SK-N-SH (cell line): ENCODE measurements at regions of chr7 and their contacts with region 1.

Region 1: DNA sequence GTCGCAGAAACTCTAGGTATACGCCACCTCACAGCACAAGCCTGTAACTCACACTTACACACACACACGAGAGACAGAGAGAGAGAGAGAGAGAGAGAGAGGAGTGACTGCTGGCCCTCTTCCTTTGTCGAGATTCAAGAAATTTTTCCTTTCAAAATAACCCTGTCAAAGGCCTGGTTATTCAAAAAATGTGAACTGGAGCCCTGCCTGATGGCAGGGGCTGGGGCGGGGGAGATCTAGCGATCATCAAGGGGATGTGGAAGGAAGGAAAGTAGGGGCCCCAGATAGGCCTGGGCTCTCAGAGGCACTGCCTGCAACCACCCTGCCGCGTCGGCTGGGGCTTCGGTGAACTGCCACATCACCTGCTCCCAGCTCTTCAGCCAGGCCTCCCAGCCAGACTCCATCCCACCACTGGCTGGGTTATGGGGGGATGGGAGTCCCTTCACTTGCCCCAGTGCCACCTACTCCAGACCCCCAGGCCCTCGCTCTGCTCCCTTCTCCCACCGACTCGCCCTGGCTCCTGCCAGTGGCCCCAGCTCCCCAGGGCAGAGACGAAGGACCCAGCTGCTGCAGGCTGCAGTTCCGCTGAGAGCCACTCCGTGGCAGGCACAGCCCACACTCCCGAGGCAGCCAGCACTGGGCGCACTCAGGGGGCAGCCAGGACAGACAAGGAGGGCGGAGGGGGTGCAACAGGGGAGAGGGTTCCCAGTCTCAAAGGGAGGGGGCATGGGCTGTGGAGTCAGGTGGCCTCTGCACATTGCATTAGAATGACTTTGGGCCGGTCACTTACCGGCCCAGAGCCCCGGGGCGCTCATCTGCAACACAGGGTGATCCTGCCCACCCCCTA is 15.3 kb downstream of the KCNH2 start:
- DNase-seq: peak; percentile 94
- H3K4me3 ChIP-seq: peak overlapping the region in 1 of 2 experiments; percentile 48; a peak in 1 of 4 replicates
- H3K27ac ChIP-seq: peak overlapping the region in 1 of 2 experiments; percentile 97; a peak in 2 of 4 replicates
- H3K4me1 ChIP-seq: peaks cover 0 to 89% of the 10 kb centered on the region in 2 experiments; a peak in 2 of 4 replicates
- H3K27me3 ChIP-seq: peaks cover 16% of the 10 kb centered on the region
- CTCF ChIP-seq: peak; percentile 95
- EP300 ChIP-seq: peak in 1 of 2 experiments; percentile 39; a peak in 1 of 4 replicates
- RAD21 ChIP-seq: peak; percentile 94

Region 2: DNA sequence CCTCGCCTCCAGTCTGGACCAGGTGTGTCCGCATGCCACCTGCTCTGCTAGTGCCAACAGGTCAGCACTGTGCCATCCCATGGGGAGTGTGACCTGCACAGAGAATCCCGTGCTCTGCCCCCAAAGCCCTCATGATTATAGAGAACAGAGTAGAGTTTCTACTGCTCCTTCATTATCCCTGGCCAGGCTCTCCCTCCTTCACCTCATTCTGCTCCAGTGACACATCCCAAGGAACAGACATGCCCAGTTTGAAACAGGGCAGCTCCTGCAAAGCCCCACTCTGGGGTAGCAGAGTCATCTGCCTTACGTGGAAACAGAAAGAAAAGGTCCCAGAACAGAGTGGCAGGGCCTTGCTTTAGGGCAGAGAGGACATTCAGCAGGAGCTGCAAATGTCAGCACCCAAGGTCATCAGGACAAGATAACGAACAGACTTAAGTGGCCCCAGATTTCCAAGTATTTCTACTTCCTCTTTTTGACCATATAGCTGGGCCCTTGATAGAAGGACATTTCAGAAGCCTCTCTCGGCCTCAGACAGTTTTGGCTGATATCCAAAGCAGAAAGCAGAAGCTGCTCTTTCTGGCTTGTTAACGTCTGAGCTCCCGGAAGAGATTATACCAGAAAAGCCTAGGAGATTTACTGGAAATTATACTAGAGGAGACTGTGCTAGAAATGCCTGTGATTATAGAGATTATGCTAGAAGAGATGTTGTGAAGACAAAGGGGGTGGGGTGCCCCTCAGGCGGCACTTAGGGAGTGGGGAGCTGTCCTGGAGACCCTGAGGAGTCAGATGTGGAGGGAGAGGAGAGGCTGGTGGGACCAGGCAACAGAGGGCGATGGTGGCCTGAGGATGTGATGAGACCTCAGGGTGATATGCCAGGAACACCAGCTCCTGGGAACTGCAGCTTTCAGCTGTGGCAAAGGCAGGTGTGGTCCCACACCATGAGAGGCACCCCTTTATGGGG is 175.2 kb before region 1 on chr7:
- CTCF ChIA-PET with region 1: interaction called, 67 read pairs
- POLR2A ChIA-PET with region 1: interaction called, 5 read pairs
- DNase-seq: peak; percentile 75
- H3K4me3 ChIP-seq: no peak overlapping the region
- H3K27ac ChIP-seq: peak overlapping the region; percentile 47 to 100; a peak in 3 of 4 replicates
- H3K4me1 ChIP-seq: peaks cover 19 to 61% of the 10 kb centered on the region in 2 experiments; a peak in 3 of 4 replicates
- H3K27me3 ChIP-seq: no peaks in the 10 kb centered on the region
- CTCF ChIP-seq: no peak
- EP300 ChIP-seq: peak; percentile 31 to 96; a peak in 3 of 4 replicates
- RAD21 ChIP-seq: peak; percentile 59

Region 3: DNA sequence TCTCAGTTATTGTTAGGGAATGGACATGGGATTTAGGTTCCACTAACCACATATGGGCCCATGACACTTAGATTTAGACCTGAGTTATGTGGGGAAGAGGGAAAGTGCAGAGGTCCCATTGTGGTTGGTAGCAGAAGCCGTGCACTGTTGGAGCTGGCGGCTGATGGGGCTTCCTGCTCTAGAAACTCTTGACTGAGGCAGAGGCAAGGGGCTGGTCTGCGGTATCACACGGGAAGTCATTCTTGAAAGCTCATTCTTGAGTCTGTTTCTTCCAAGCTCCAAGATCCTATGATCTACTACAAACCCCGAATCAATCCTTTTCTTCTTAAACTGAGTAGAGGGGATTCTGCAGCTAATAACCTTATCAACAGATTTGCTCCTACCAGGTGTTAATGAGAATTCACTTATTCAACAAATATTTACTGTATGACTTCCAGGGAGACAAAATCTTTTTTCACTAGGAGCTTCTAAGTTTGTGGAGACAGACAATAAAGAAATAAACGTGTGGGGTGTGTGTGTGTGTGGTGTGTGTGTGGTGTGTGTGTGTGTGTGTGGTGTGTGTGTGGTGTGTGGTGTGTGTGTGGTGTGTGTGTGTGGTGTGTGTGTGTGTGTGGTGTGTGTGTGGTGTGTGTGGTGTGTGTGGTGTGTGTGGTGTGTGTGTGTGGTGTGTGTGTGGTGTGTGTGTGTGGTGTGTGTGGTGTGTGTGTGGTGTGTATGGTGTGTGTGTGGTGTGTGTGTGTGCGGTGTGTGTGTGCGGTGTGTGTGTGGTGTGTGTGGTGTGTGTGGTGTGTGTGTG is 53.4 kb before region 1 on chr7:
- CTCF ChIA-PET with region 1: interaction called, 280 read pairs
- POLR2A ChIA-PET with region 1: no interaction called
- DNase-seq: peak; percentile 21
- H3K4me3 ChIP-seq: no peak overlapping the region
- H3K27ac ChIP-seq: no peak overlapping the region
- H3K4me1 ChIP-seq: peaks cover 0 to under 1% of the 10 kb centered on the region in 2 experiments; a peak in 1 of 4 replicates
- H3K27me3 ChIP-seq: peaks cover 14% of the 10 kb centered on the region
- CTCF ChIP-seq: no peak
- EP300 ChIP-seq: no peak
- RAD21 ChIP-seq: no peak

Region 4: DNA sequence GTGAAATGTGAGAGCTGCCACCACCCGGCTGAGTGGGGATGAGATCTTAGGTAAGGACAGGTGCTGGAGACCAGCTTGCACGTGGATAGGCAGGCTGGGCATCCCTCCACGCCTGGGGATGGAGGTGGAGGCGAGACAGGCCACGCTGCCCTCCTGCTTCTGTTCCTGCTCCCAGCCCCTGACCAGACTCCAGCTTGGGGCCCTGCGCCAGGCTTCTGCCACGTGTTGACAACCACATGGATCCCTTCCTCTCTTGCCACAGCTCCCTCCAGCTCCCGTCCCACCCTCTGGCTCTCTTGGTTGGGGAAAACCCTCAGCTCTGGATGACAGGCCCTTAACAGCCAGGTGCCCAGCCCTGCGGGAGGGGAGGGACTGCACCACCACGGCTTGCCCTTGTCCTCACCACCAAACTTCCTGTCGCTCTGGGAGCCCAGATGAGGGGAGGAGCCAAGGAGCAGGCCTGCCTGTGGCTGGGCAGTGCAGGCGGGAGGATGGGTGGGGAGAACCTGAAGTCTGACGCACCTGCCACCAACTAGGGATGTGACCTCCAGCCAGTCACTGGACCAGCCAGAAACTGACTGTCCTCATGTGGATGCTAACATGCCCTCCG is 20.7 kb before region 1 on chr7:
- CTCF ChIA-PET with region 1: interaction called, 49 read pairs
- POLR2A ChIA-PET with region 1: interaction called, 14 read pairs
- DNase-seq: peak; percentile 71
- H3K4me3 ChIP-seq: no peak overlapping the region
- H3K27ac ChIP-seq: peak overlapping the region in 1 of 2 experiments; percentile 82; a peak in 2 of 4 replicates
- H3K4me1 ChIP-seq: peaks cover 0 to 84% of the 10 kb centered on the region in 2 experiments; a peak in 2 of 4 replicates
- H3K27me3 ChIP-seq: 0 out of 2 replicates have a peak, but pooled peaks cover 11% of the 10 kb centered on the region
- CTCF ChIP-seq: no peak
- EP300 ChIP-seq: 0 out of 4 replicates have a peak, but pooled peaks of 1 of the 2 experiments have one; percentile 17
- RAD21 ChIP-seq: no peak

Region 5: GRCh38 chr7:150974468-150975391 is 12.0 kb after region 1 on chr7:
- CTCF ChIA-PET with region 1: interaction called, 761 read pairs
- POLR2A ChIA-PET with region 1: interaction called, 41 read pairs
- DNase-seq: peak; percentile 82
- H3K4me3 ChIP-seq: peak overlapping the region in 1 of 2 experiments; percentile 37; a peak in 2 of 4 replicates
- H3K27ac ChIP-seq: peak overlapping the region in 1 of 2 experiments; percentile 100; a peak in 3 of 4 replicates
- H3K4me1 ChIP-seq: peaks cover 0 to 90% of the 10 kb centered on the region in 2 experiments; a peak in 2 of 4 replicates
- H3K27me3 ChIP-seq: peaks cover 71% of the 10 kb centered on the region
- CTCF ChIP-seq: peak; percentile 36
- EP300 ChIP-seq: no peak
- RAD21 ChIP-seq: peak; percentile 38; the same call in 1 of the 2 replicates

Region 6: DNA sequence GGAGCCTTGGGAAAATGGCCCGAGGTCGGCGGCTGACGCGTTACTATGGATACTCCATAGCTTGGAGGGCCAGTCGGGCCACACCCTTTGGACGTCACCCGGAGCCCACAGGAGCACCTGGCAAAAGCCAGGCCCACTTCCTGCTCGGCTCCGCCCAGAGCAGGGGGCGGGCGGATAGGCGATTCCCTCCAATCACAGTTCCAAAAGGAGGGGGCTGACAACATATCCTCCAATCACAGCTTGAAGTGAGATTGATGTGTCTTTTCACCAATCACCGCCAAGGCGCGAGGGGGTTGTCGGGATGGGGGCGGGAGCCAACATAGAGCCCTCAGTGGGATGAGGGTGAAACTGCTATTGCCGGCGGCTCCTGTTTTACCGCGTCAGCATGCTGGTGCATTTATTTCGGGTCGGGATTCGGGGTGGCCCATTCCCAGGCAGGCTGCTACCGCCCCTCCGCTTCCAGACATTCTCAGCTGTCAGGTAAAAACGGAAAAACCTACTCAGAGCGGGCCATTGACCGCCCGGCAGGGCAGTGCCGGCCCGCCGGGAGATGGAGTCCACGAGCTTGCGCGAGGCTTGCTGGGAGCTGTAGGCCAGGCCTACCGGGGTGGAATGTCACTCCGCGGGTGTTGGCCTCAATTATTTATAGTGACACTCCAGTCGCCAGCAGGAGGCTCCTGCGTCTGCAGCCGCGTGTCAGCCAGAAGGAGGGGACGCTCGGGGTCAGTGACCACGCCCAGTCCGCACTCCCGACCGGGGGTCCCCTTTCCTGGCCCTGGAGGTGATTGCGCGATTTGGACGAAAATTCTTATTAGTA is 65.6 kb after region 1 on chr7 and contains the start of gene ABCB8:
- CTCF ChIA-PET with region 1: interaction called, 10 read pairs
- POLR2A ChIA-PET with region 1: no interaction called
- DNase-seq: peak; percentile 100
- H3K4me3 ChIP-seq: peak within 1 kb of the TSS; percentile 84 to 85
- H3K27ac ChIP-seq: peak within 1 kb of the TSS; percentile 69 to 90
- H3K4me1 ChIP-seq: peaks cover 7 to 10% of the 10 kb centered on the region in 2 experiments; a peak in 2 of 4 replicates
- H3K27me3 ChIP-seq: no peaks in the 10 kb centered on the region
- CTCF ChIP-seq: peak; percentile 59
- EP300 ChIP-seq: no peak
- RAD21 ChIP-seq: peak; percentile 83
- polyA plus RNA-seq, gene ABCB8: 36.0 and 38.3 TPM in 2 replicates

Region 7: GRCh38 chr7:151341357-151342101 is 378.8 kb after region 1 on chr7 and contains the start of gene NUB1:
- CTCF ChIA-PET with region 1: no interaction called
- POLR2A ChIA-PET with region 1: no interaction called
- DNase-seq: peak; percentile 99
- H3K4me3 ChIP-seq: peak within 1 kb of the TSS; percentile 81 to 93
- H3K27ac ChIP-seq: peak within 1 kb of the TSS; percentile 38 to 56; a peak in 3 of 4 replicates
- H3K4me1 ChIP-seq: peaks cover 15 to 17% of the 10 kb centered on the region in 2 experiments
- H3K27me3 ChIP-seq: no peaks in the 10 kb centered on the region
- CTCF ChIP-seq: no peak
- EP300 ChIP-seq: no peak
- RAD21 ChIP-seq: no peak
- polyA plus RNA-seq, gene NUB1: 54.0 and 56.6 TPM in 2 replicates